Activated T-helper 2 cell treated with anti-CD3 and anti-CD28 coated beads, Interferon-gamma antibody, Interleukin-2, Interleukin-4, amounts not matched to agents 10 μg/mL and 5 μg/mL and 100 μg/mL, durations not matched to agents 14 hours and 24 hours and 36 hours (primary cell): ENCODE measurements at regions of chr5 and their contacts with region 1.

Region 1: DNA sequence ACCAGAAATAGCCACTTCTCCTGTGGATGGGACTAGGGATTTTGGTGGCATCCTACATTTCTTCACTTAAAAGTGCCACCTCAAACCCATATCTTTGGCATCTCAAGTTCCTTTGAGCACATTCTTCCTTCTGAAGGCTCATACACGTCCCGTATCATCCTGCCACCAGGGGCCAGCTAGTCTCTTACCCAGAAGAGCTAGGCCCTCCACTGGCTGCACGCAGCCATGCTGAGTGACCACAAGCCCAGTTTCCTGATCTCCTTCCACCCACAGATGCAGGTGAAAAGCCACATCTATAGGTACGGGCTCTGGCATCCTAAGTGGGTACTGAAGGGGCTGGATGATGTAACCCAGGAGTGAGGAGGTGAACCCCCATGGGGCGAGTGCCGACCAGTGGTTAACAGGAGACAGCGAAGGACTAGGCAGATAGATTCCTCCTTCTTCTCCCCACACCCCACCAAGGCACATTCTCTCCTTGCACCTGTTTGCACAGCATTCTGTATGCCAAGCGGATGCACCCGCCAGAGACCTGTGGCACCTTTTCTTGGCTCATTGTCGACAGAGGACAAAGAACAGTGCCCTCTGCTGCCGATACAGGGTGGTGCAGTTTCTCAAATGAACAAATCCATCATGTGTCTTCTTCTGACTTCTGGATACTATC is 14.4 kb upstream of the SCGB3A1 start:
- DNase-seq: peak; percentile 39
- H3K4me3 Mint-ChIP-seq: no peak overlapping the region
- H3K27ac Mint-ChIP-seq: no peak overlapping the region
- H3K4me1 Mint-ChIP-seq: no peaks in the 10 kb centered on the region
- H3K27me3 Mint-ChIP-seq: no peaks in the 10 kb centered on the region

Region 2: GRCh38 chr5:180523629-180524466 is 81.8 kb before region 1 on chr5:
- intact Hi-C with region 1: loop called (anchors 10 kb)
- DNase-seq: no peak
- H3K4me3 Mint-ChIP-seq: no peak overlapping the region
- H3K27ac Mint-ChIP-seq: no peak overlapping the region
- H3K4me1 Mint-ChIP-seq: peaks cover 41% of the 10 kb centered on the region
- H3K27me3 Mint-ChIP-seq: no peaks in the 10 kb centered on the region